ENCODE measurements at regions of chr12 and their contacts with region 1.

Region 1: GRCh38 chr12:45745861-45746277 is 16.4 kb downstream of the ARID2 start:
- DNase-seq: no peak
- H3K4me3 ChIP-seq: no peak overlapping the region
- H3K27ac ChIP-seq: no peak overlapping the region
- H3K4me1 ChIP-seq: no peaks in the 10 kb centered on the region
- H3K27me3 ChIP-seq: no peaks in the 10 kb centered on the region
- CTCF ChIP-seq: no peak
- EP300 ChIP-seq: no peak
- POLR2A ChIP-seq: no peak
- RAD21 ChIP-seq: no peak

Region 2: GRCh38 chr12:45718306-45718705 is 27.6 kb before region 1 on chr12:
- CTCF ChIA-PET with region 1: no interaction called
- POLR2A ChIA-PET with region 1: no interaction called
- DNase-seq: no peak
- H3K4me3 ChIP-seq: no peak overlapping the region
- H3K27ac ChIP-seq: no peak overlapping the region
- H3K4me1 ChIP-seq: no peaks in the 10 kb centered on the region; a peak in 1 of 7 replicates
- H3K27me3 ChIP-seq: no peaks in the 10 kb centered on the region
- CTCF ChIP-seq: no peak
- EP300 ChIP-seq: no peak
- POLR2A ChIP-seq: no peak
- RAD21 ChIP-seq: no peak

Region 3: DNA sequence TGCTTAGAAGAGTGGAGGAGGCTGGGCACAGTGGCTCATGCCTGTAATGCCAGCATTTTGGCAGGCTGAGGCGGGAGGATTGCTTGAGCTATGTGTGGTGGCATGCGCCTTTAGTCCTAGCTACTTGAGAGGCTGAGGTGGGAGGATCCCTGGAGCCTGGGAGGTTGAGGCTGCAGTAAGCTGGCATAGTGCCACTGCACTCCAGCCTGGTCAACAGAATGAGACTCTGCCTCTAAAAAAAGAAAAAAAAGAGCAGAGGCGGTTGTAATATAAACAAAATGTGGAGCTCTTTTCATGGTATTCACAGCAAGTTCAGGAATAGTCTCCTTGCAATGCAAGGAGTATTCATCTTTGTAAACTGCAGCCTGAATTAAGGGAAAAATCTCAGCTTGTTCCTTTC is 10.8 kb after region 1 on chr12:
- CTCF ChIA-PET with region 1: interaction called, 12 read pairs
- POLR2A ChIA-PET with region 1: interaction called, 4 read pairs
- DNase-seq: no peak
- H3K4me3 ChIP-seq: no peak overlapping the region
- H3K27ac ChIP-seq: no peak overlapping the region
- H3K4me1 ChIP-seq: peaks cover 0 to 5% (median 0%) of the 10 kb centered on the region in 4 experiments; a peak in 3 of 7 replicates
- H3K27me3 ChIP-seq: no peaks in the 10 kb centered on the region
- CTCF ChIP-seq: no peak
- EP300 ChIP-seq: no peak
- POLR2A ChIP-seq: no peak
- RAD21 ChIP-seq: no peak